ENCODE measurements at regions of chr17 and their contacts with region 1.

Region 1: GRCh38 chr17:64534175-64534574 is 27.4 kb downstream of the CEP95 start:
- DNase-seq: peak in 4 of 35 experiments; percentile 1 to 22 (median 4)
- ATAC-seq: peak in 2 of 4 experiments; percentile 23 to 46
- H3K4me3 ChIP-seq: no peak overlapping the region
- H3K4me3 Mint-ChIP-seq: no peak overlapping the region
- H3K27ac ChIP-seq: no peak overlapping the region
- H3K27ac Mint-ChIP-seq: peak overlapping the region; percentile 13 to 42
- H3K4me1 ChIP-seq: no peaks in the 10 kb centered on the region
- H3K4me1 Mint-ChIP-seq: peaks cover 0 to 6% (median 0%) of the 10 kb centered on the region in 3 donors
- H3K27me3 ChIP-seq: no peaks in the 10 kb centered on the region
- H3K27me3 Mint-ChIP-seq: no peaks in the 10 kb centered on the region

Region 2: DNA sequence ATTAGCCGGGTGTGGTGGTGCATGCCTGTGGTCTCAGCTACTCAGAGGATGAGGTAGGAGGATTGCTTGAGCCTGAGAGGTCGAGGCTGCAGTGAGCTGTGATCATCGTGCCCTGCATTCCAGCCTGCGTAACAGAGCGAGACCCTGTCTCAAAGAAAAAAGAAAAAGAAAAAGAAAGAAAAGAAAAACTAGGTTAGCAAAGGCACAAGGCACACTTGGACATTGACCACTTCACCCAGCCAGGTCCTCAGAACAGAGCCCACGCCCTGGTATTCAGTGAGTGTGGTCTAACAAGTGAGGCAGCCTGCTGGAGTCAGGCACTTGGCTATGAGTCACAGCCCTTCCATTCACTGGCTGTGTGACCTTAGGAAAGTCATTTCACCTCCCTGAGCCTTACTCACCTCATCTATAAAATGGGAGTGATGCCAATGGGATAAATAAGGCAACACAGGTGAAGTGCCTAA is 74.9 kb before region 1 on chr17:
- CTCF ChIA-PET with region 1: no interaction called
- POLR2A ChIA-PET with region 1: no interaction called
- DNase-seq: no peak
- ATAC-seq: no peak
- H3K4me3 ChIP-seq: no peak overlapping the region
- H3K4me3 Mint-ChIP-seq: no peak overlapping the region
- H3K27ac ChIP-seq: no peak overlapping the region
- H3K27ac Mint-ChIP-seq: no peak overlapping the region
- H3K4me1 ChIP-seq: peaks cover 8 to 18% of the 10 kb centered on the region in 2 experiments
- H3K4me1 Mint-ChIP-seq: peaks cover 13 to 31% (median 22%) of the 10 kb centered on the region in 3 donors
- H3K27me3 ChIP-seq: peaks cover 0 to 3% of the 10 kb centered on the region in 2 experiments
- H3K27me3 Mint-ChIP-seq: peaks cover 0 to 7% of the 10 kb centered on the region in 2 donors

Region 3: GRCh38 chr17:64496786-64497564 is 37.2 kb before region 1 on chr17 and contains the start of gene POLG2:
- CTCF ChIA-PET with region 1: no interaction called
- POLR2A ChIA-PET with region 1: interaction called, 3 to 12 read pairs
- DNase-seq: peak; percentile 89 to 98 (median 94)
- ATAC-seq: peak; percentile 81 to 89 (median 88)
- H3K4me3 ChIP-seq: peak within 1 kb of the TSS; percentile 84 to 98
- H3K4me3 Mint-ChIP-seq: peak within 1 kb of the TSS; percentile 99 to 100 (median 100)
- H3K27ac ChIP-seq: peak within 1 kb of the TSS; percentile 91
- H3K27ac Mint-ChIP-seq: peak within 1 kb of the TSS; percentile 99
- H3K4me1 ChIP-seq: peaks cover 28 to 36% of the 10 kb centered on the region in 2 experiments
- H3K4me1 Mint-ChIP-seq: peaks cover 81 to 90% (median 87%) of the 10 kb centered on the region in 3 donors
- H3K27me3 ChIP-seq: no peaks in the 10 kb centered on the region
- H3K27me3 Mint-ChIP-seq: no peaks in the 10 kb centered on the region
- total RNA-seq, gene POLG2: 43.1 to 71.4 (median 59.3) TPM

Measured in T-cell (primary cell).